Gastrocnemius medialis (tissue), 4 donors: ENCODE measurements at regions of chr14 and their contacts with region 1.

Region 1: DNA sequence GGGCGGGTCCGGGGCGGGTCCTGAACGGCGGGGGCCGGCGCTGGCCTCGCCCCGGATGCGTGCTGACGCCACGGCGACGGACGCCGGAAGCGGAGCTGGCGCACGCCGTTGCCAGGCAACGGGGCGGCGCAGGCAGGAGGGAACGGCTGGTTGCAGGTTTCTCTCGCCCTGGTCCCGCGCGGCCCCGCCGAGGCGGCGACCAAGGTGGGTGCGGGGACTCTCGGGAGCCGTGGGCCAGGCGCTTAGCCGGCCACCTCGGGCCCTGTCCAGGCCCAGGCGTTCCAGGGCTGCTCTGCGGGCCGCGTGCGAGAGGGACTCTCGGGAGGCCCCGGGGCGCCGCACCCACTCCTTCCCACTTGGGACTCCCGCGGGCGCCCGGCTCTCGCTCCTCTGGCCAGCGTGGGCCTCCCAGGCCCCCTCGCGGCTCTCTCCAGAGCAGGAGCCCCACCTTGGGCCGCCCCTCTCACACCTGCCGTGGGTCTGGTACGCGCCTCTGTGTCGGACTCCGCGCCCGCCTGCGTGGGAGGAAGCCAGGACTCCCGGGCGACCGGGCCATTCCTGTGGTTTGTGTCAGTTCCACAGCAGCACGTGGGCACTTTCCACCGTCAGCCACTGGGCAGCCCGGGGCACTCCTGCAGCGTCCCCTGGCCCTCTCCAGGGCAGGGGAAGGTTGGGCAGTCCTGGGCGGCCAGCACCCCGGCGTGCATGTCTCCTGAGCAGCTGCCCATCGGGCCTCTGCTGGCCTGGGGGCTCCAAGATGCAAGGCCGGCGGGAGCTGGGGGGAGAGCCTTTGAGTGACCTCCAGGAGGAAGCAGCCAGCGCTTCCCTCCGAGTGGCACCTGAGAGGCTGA is at the start of gene CLBA1:
- DNase-seq: peak; percentile 71 to 84
- ATAC-seq: peak; percentile 94 to 95
- H3K4me3 ChIP-seq: peak within 1 kb of the TSS; percentile 67 to 90 (median 79)
- H3K27ac ChIP-seq: peak within 1 kb of the TSS; percentile 68 to 87 (median 80)
- H3K4me1 ChIP-seq: peaks cover 7 to 9% of the 10 kb centered on the region in 2 donors
- H3K27me3 ChIP-seq: no peaks in the 10 kb centered on the region
- CTCF ChIP-seq: no peak
- POLR2A ChIP-seq: peak in 1 of 2 donors; percentile 8
- total RNA-seq, gene CLBA1: 0.71 to 4.0 (median 3.3) TPM

Region 2: DNA sequence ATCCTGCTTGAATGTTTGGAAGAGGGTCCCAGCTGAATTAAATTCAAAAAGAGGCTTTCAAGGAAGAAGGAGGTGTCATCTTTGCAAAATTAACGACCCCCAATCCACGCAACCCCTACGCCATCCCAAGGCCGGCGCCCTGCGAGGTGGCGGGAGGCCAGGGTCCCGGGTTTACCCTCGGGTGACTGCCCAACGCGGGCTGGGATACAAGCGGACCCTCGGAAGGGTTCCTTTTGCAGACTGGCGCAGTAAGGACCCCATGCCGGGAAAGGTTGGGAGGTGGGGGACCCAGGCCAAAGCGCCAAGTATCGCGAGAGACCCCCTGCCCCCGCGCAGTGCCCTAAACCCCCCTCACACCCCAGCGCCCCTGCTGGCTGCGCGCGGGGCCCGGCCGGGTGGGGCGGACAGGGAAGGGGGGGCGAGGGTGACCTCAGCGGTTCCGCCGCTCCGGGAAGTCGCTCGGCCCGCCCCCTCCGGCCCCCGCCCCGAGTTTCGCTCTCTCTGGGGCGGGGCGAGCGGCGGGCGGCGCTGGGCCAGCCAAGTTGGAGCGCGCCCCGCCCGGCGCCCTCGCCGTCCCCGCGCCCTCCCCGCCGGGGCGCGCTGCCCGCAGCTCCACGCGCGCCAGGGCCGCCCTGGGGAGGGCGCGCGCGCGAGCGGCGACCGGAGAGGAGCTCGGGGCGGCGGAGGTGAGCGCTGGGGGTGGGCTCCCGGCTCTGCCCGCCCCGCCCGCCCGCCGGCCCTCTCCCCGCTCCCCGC is 185.7 kb before region 1 on chr14:
- in situ Hi-C with region 1: no loop called
- intact Hi-C with region 1: loop called (anchors 5 kb)
- DNase-seq: peak; percentile 68 to 74
- ATAC-seq: peak; percentile 63 to 66
- H3K4me3 ChIP-seq: peak overlapping the region; percentile 45 to 77 (median 58)
- H3K27ac ChIP-seq: peak overlapping the region; percentile 84 to 91 (median 89)
- H3K4me1 ChIP-seq: peaks cover 19 to 32% of the 10 kb centered on the region in 2 donors
- H3K27me3 ChIP-seq: no peaks in the 10 kb centered on the region
- CTCF ChIP-seq: peak in 4 of 5 experiments; percentile 28 to 53 (median 36)
- POLR2A ChIP-seq: peak in 1 of 2 donors; percentile 54

Region 3: DNA sequence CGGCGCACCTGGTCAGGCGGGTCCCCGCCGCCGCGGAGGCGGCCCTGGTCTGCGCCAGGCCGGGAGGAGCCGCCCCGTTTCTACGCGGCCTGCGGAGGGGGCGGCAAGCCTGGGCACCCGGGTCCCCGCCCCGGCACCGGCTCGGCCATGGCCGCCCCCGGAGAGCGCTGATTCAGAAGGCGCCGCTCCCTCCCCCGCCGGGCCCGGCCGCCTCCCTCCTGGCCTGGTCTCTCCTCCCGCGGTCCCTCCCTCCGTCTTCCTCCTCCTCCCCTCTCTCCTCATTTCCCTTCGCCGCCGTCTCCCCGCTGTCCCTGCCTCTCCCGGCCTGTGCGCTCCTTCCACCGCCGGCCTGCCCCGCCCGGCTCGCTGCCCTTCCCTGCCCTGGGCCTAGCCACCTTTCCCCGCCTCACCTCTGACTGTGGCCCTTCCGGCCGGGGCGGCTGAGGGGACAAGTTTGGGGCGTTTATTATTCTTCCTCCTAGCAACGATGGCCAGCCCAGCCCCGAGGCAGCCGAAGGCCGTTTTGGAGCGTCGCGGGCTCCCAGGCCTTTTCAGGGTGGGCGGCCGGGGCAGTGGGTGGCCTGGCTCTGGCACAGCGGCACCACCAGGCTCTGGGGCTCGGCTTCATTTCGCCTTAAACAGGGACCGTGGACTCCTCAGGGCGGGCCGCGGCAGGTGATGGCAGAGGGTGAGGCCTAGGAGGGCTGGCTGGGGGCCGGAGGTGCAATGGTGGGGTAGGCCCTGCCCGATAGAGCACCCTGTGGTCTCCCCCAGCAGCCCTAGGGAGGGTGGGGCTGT is 120.1 kb before region 1 on chr14:
- in situ Hi-C with region 1: no loop called
- intact Hi-C with region 1: no loop called
- DNase-seq: no peak
- ATAC-seq: peak; percentile 61 to 77
- H3K4me3 ChIP-seq: peak overlapping the region; percentile 65 to 76 (median 73)
- H3K27ac ChIP-seq: peak overlapping the region; percentile 20 to 63 (median 50)
- H3K4me1 ChIP-seq: peaks cover 14 to 17% of the 10 kb centered on the region in 2 donors
- H3K27me3 ChIP-seq: peaks cover 13 to 16% (median 14%) of the 10 kb centered on the region in 3 donors
- CTCF ChIP-seq: no peak
- POLR2A ChIP-seq: peak in 1 of 2 donors; percentile 30

Region 4: DNA sequence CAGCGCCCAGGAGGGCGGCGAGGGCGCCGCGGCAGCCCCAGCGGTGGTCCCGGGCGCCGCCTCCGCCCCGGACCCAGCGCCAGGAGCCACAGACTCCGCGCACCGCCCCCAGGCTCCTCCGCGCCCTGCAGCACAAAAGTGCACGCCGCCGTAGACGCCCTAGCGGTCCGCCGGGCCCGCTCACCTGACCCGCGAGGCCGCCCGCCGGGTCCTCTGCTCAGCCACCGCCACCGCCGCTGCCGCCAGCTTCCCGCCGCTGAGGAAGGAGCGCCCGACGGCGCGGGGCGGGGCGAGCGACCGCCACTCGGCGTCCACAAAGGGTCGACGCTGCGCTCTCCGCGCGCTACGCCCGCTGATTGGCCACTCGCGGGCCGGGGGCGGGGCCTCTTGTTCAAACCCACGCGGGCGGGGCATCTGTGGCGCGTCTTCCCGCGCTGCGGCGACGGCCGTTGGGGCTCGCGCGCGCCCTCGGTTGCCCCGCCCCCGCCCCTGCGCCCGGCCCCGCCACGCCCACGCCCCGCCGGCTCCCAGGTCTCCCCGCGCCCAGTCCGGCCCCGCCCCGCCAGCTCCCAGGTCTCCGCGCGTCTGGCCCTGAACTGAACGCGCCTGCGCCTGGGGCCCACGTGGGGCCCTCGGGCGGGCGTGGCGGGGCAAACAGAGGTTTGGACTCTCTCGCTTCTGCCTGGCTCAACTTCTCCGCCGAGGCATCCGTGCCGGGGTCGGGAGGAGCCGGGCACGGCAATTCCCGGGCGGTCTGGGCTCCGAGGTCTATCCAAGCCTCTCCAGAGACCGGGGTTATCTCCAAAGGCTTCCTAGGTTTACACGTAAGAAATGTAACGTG is 35.1 kb after region 1 on chr14 and contains the start of gene CDCA4:
- in situ Hi-C with region 1: no loop called
- intact Hi-C with region 1: loop called (anchors 1 kb)
- DNase-seq: peak; percentile 88 to 94
- ATAC-seq: peak; percentile 97
- H3K4me3 ChIP-seq: peak within 1 kb of the TSS; percentile 70 to 83 (median 80)
- H3K27ac ChIP-seq: peak within 1 kb of the TSS; percentile 75 to 91 (median 86)
- H3K4me1 ChIP-seq: peaks cover 16 to 23% of the 10 kb centered on the region in 2 donors
- H3K27me3 ChIP-seq: no peaks in the 10 kb centered on the region
- CTCF ChIP-seq: peak in 1 of 5 experiments; percentile 16
- POLR2A ChIP-seq: peak; percentile 75 to 82
- total RNA-seq, gene CDCA4: 0.71 to 2.2 (median 1.8) TPM

Region 5: DNA sequence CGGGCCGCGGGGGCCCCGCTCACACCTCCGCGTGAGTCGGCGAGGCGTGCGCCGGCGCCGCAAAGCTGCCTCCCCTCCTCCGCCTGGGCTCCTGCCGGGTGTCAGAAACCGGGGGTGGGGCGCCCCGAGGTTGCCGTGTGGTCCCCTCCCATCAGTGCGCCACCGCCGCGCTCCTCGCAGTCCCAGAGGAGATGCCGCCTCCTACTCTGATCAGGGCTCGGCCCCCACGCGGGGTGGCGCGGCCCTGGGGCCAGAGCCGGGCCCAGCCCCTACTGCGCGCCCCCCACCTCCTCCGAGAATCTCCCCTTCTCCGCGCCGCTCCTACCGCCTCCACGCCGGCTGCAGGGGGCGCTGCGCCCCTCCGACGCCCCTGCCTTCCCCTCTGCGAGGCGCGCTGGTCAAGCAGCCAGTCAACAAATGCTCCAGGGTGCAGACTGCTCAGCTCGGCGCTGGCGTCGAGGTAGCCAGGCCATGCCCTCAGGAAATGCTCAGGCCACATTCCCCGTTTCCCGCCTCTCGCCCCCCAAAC is 183.1 kb after region 1 on chr14:
- in situ Hi-C with region 1: no loop called
- intact Hi-C with region 1: loop called (anchors 10 kb)
- DNase-seq: no peak
- ATAC-seq: peak; percentile 5 to 13
- H3K4me3 ChIP-seq: peak overlapping the region; percentile 38 to 57 (median 44)
- H3K27ac ChIP-seq: peak overlapping the region; percentile 76 to 83 (median 80)
- H3K4me1 ChIP-seq: peaks cover 49 to 58% of the 10 kb centered on the region in 2 donors
- H3K27me3 ChIP-seq: no peaks in the 10 kb centered on the region
- CTCF ChIP-seq: peak in 4 of 5 experiments; percentile 44 to 60 (median 56)
- POLR2A ChIP-seq: peak in 1 of 2 donors; percentile 19

Region 6: DNA sequence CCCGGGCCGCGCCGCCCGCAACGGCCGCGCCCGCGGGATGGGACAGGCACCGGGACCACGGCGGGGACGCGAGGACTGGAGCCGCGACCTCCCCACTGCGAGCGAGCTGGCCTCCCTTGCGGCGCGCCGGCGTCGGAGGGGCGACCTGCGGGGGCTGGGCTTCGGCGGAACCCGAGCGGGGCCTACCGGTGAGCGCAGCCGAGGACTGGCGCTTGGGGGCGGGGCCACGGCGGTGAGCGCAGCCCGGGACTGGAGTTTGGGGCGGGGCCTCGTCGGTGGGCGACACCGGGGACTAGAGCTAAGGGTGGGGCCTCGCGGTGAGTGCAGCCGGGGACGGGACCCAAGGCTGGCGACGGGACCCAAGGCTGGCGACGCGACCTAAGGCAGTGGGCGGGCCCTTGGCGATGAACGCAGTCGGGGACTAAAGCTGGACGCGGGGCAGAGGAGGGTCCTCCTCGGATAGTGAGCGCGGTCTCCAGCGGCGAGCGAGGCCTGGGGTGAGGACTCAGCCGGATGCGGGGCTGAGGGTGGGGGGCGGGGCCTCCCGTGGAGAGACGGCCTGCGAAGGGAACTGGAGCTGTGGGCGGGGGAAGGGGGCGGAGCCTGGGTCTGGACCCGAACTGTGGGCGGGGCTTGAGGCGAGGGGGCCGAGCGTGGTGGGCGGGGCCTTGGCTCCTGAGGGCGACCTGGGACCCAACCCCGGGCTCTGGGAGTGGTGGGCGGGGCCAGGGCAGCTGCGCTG is 315.1 kb after region 1 on chr14 and contains the start of gene BRF1:
- in situ Hi-C with region 1: no loop called
- intact Hi-C with region 1: loop called (anchors 1 kb)
- DNase-seq: peak; percentile 96 to 97
- ATAC-seq: peak; percentile 91 to 94
- H3K4me3 ChIP-seq: peak within 1 kb of the TSS; percentile 69 to 97 (median 75)
- H3K27ac ChIP-seq: peak within 1 kb of the TSS; percentile 90 to 99 (median 94)
- H3K4me1 ChIP-seq: peaks cover 12 to 14% of the 10 kb centered on the region in 2 donors
- H3K27me3 ChIP-seq: no peaks in the 10 kb centered on the region
- CTCF ChIP-seq: no peak
- POLR2A ChIP-seq: peak; percentile 73 to 76
- total RNA-seq, gene BRF1: 19.5 to 27.4 (median 21.4) TPM